ENCODE measurements at regions of chr4 and their contacts with region 1.

Region 1: DNA sequence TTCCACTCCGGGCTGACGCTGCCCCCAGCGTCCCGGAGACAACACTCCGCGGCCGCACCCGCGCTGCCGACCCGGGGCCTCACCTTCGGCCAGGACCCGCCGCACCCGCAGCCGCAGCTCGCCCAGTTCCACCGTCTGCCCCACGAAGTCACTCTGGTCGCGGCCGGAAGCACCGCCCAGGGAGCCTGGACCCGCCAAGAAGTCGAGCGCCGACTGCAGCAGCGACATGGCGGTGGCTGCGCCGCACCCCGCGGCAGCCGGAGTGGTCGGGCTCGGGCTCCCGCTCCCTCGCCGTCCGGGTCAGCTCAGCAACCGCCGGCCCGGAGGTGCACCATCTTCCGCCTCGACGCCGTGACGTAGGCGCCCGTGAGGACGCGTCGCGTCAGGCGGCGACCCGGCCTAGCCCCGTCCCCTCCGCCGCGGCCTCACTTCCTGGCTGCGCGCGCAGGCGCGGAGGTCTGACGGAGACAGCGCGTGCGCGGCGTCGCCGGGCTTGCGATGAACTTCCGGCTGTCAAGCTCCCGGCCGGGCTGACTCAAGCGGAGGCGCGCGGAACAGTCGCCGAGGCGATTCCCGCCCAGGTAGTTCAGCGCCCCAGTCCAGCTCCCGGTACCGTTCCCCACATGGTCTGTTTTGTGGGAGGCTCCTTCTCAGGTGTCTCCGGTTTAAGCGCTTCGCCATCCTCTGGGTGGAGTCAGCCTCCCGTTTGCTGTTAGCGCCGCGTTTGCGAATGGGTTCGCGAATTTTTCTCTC is at the starts of genes GAK and TMEM175:
- DNase-seq: peak; percentile 93 to 98 (median 97)
- H3K4me3 ChIP-seq: peak within 1 kb of the TSS; percentile 82 to 94
- H3K4me3 Mint-ChIP-seq: peak within 1 kb of the TSS; percentile 91 to 99 (median 95)
- H3K27ac ChIP-seq: peak within 1 kb of the TSS; percentile 99
- H3K27ac Mint-ChIP-seq: peak within 1 kb of the TSS; percentile 90 to 99 (median 97)
- H3K4me1 ChIP-seq: peaks cover 45% of the 10 kb centered on the region
- H3K4me1 Mint-ChIP-seq: peaks cover 27 to 48% (median 37%) of the 10 kb centered on the region in 4 donors
- H3K27me3 ChIP-seq: no peaks in the 10 kb centered on the region
- H3K27me3 Mint-ChIP-seq: no peaks in the 10 kb centered on the region
- total RNA-seq, gene GAK: 185 to 188 TPM
- total RNA-seq, gene TMEM175: 45.7 to 52.3 TPM

Region 2: DNA sequence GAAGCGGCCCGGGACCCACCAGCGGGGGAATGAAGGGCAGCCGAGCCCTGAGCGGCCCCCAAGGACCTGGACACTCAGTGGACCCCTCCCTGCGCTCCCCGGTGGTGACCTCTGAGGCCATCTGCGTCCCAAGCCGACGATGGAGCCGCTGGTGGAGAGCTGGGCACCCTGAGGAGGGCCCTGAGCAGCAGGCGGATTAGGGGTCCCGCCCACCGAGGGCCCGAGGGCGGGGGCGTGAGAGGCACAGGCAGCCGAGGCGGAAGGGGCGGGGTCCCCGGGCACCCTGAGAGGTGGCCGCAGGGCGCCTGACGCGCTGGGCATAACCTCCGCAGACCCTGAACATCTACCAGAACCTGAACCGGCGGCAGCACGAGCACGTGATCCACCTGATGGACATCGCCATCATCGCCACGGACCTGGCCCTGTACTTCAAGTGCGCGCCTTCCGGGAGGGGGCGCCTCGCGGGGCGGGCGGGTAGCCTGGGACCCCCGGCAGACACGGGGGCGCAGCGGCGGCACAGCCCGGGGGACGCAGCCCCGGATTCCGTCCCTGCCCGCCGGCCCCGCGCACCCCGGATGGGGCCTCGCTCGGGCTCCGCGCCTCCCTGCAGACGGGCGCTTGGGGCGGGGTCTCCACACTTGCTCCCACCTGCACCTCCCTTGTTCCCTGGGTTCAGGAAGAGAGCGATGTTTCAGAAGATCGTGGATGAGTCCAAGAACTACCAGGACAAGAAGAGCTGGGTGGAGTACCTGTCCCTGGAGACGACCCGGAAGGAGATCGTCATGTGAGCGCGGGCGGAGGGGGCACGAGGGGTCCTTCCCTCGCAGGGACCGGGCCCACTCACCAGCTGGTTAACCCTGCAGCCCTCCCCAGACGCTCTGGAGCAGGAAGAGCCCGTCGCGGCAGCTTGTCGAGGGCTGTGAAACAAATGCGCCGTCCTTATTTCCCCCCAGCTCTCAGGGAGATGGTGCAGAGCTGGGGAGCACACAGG is 268.4 kb before region 1 on chr4:
- CTCF ChIA-PET with region 1: no interaction called
- POLR2A ChIA-PET with region 1: no interaction called
- intact Hi-C with region 1: no loop called
- DNase-seq: peak; percentile 67 to 80 (median 70)
- H3K4me3 ChIP-seq: peak overlapping the region; percentile 61
- H3K4me3 Mint-ChIP-seq: peak overlapping the region; percentile 82 to 90 (median 86)
- H3K27ac ChIP-seq: peak overlapping the region; percentile 77
- H3K27ac Mint-ChIP-seq: peak overlapping the region; percentile 57 to 91 (median 88)
- H3K4me1 ChIP-seq: peaks cover 17% of the 10 kb centered on the region
- H3K4me1 Mint-ChIP-seq: peaks cover 6 to 22% (median 10%) of the 10 kb centered on the region in 4 donors
- H3K27me3 ChIP-seq: no peaks in the 10 kb centered on the region
- H3K27me3 Mint-ChIP-seq: no peaks in the 10 kb centered on the region

Region 3: DNA sequence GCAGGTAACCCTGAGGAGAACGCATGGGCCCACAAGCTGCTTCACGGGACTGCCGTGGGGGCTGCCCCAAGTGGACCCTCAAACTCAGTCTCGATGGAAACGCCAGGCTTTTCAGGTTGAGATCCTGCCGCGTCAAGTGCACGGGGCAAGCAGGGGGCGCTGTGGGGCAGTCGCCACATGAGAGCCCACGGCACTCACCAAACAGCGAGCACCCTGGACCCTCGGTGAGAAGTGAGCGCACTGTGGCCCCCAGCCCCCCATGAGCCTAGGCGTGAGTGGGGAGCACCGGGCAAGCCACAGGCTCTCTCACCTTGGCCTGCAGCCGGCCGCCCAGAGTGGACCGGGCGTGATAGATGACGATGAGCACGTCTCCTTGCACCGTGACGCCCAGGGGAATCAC is 55.4 kb before region 1 on chr4:
- CTCF ChIA-PET with region 1: interaction called, 5 read pairs
- POLR2A ChIA-PET with region 1: interaction called, 15 read pairs
- intact Hi-C with region 1: no loop called
- DNase-seq: no peak
- H3K4me3 ChIP-seq: no peak overlapping the region
- H3K4me3 Mint-ChIP-seq: peak overlapping the region in 1 of 8 donors; percentile 21
- H3K27ac ChIP-seq: no peak overlapping the region
- H3K27ac Mint-ChIP-seq: peak overlapping the region in 3 of 7 donors; percentile 21 to 81 (median 59)
- H3K4me1 ChIP-seq: peaks cover 26% of the 10 kb centered on the region
- H3K4me1 Mint-ChIP-seq: peaks cover 24 to 36% (median 28%) of the 10 kb centered on the region in 4 donors
- H3K27me3 ChIP-seq: no peaks in the 10 kb centered on the region
- H3K27me3 Mint-ChIP-seq: no peaks in the 10 kb centered on the region

Region 4: GRCh38 chr4:973431-974397 is 41.6 kb after region 1 on chr4 and contains the start of gene DGKQ:
- CTCF ChIA-PET with region 1: no interaction called
- POLR2A ChIA-PET with region 1: interaction called, 8 read pairs
- intact Hi-C with region 1: loop called (anchors 1 kb)
- DNase-seq: peak; percentile 78 to 88 (median 83)
- H3K4me3 ChIP-seq: peak within 1 kb of the TSS; percentile 36 to 57
- H3K4me3 Mint-ChIP-seq: peak within 1 kb of the TSS; percentile 34 to 76 (median 52)
- H3K27ac ChIP-seq: peak within 1 kb of the TSS; percentile 51
- H3K27ac Mint-ChIP-seq: peak within 1 kb of the TSS in 1 of 7 donors; percentile 60
- H3K4me1 ChIP-seq: peaks cover 24% of the 10 kb centered on the region
- H3K4me1 Mint-ChIP-seq: peaks cover 0 to 13% (median 3%) of the 10 kb centered on the region in 4 donors
- H3K27me3 ChIP-seq: no peaks in the 10 kb centered on the region
- H3K27me3 Mint-ChIP-seq: no peaks in the 10 kb centered on the region
- total RNA-seq, gene DGKQ: 25.9 to 29.6 TPM

Region 5: GRCh38 chr4:986879-987623 is 54.9 kb after region 1 on chr4 and contains the start of gene IDUA:
- CTCF ChIA-PET with region 1: interaction called, 3 read pairs
- POLR2A ChIA-PET with region 1: interaction called, 9 read pairs
- intact Hi-C with region 1: loop called (anchors 1 kb)
- DNase-seq: peak; percentile 79 to 84 (median 82)
- H3K4me3 ChIP-seq: peak within 1 kb of the TSS; percentile 76 to 83
- H3K4me3 Mint-ChIP-seq: peak within 1 kb of the TSS; percentile 88 to 95 (median 90)
- H3K27ac ChIP-seq: peak within 1 kb of the TSS; percentile 60
- H3K27ac Mint-ChIP-seq: peak within 1 kb of the TSS; percentile 40 to 92 (median 83)
- H3K4me1 ChIP-seq: peaks cover 34% of the 10 kb centered on the region
- H3K4me1 Mint-ChIP-seq: peaks cover 8 to 35% (median 15%) of the 10 kb centered on the region in 4 donors
- H3K27me3 ChIP-seq: no peaks in the 10 kb centered on the region
- H3K27me3 Mint-ChIP-seq: no peaks in the 10 kb centered on the region
- total RNA-seq, gene IDUA: 63.0 to 64.1 TPM

Region 6: GRCh38 chr4:1011022-1011694 is 79.0 kb after region 1 on chr4 and contains the start of gene FGFRL1:
- CTCF ChIA-PET with region 1: no interaction called
- POLR2A ChIA-PET with region 1: interaction called, 11 read pairs
- intact Hi-C with region 1: loop called (anchors 1 kb)
- DNase-seq: peak; percentile 86 to 90 (median 87)
- H3K4me3 ChIP-seq: peak within 1 kb of the TSS; percentile 22 to 75
- H3K4me3 Mint-ChIP-seq: peak within 1 kb of the TSS; percentile 85 to 94 (median 90)
- H3K27ac ChIP-seq: peak within 1 kb of the TSS; percentile 76
- H3K27ac Mint-ChIP-seq: peak within 1 kb of the TSS; percentile 94 to 98 (median 97)
- H3K4me1 ChIP-seq: peaks cover 25% of the 10 kb centered on the region
- H3K4me1 Mint-ChIP-seq: peaks cover 6 to 17% (median 13%) of the 10 kb centered on the region in 4 donors
- H3K27me3 ChIP-seq: peaks cover 7% of the 10 kb centered on the region
- H3K27me3 Mint-ChIP-seq: peaks cover 14 to 23% of the 10 kb centered on the region in 2 donors
- total RNA-seq, gene FGFRL1: 22.4 TPM

Region 7: DNA sequence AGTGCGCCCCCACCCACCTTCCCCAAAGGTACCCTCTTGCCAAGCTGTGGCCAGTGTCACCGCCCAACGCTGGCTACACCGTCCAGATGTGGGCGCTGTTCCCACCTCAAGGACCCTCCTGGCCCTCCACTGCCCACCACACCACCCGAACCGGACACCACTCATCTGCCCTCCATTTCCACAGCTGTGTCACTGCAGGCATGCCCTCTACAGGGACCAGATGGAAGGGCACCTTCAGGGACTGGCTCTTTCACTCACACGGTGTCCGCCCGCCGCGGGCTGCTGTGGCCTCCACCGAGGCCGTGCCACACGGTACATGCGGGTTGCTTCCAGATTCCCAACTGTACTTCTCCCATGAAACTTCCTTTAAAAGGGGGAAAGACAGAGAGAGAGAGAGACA is 664.3 kb after region 1 on chr4:
- CTCF ChIA-PET with region 1: no interaction called
- POLR2A ChIA-PET with region 1: no interaction called
- intact Hi-C with region 1: no loop called
- DNase-seq: no peak
- H3K4me3 ChIP-seq: no peak overlapping the region
- H3K4me3 Mint-ChIP-seq: no peak overlapping the region
- H3K27ac ChIP-seq: no peak overlapping the region
- H3K27ac Mint-ChIP-seq: peak overlapping the region in 1 of 7 donors; percentile 61
- H3K4me1 ChIP-seq: no peaks in the 10 kb centered on the region
- H3K4me1 Mint-ChIP-seq: no peaks in the 10 kb centered on the region
- H3K27me3 ChIP-seq: no peaks in the 10 kb centered on the region
- H3K27me3 Mint-ChIP-seq: peaks cover 0 to 7% of the 10 kb centered on the region in 2 donors